Endothelial cell of umbilical vein (primary cell): ENCODE measurements at regions of chr17 and their contacts with region 1.

Region 1: GRCh38 chr17:35540589-35541404 is 3.3 kb upstream of the SLFN12L start:
- DNase-seq: peak; percentile 85
- H3K4me3 ChIP-seq: peak overlapping the region in 2 of 3 experiments; percentile 1 to 38
- H3K27ac ChIP-seq: peak overlapping the region; percentile 52
- H3K4me1 ChIP-seq: peaks cover 44% of the 10 kb centered on the region
- H3K27me3 ChIP-seq: no peaks in the 10 kb centered on the region
- CTCF ChIP-seq: no peak
- POLR2A ChIP-seq: peak; percentile 31

Region 2: DNA sequence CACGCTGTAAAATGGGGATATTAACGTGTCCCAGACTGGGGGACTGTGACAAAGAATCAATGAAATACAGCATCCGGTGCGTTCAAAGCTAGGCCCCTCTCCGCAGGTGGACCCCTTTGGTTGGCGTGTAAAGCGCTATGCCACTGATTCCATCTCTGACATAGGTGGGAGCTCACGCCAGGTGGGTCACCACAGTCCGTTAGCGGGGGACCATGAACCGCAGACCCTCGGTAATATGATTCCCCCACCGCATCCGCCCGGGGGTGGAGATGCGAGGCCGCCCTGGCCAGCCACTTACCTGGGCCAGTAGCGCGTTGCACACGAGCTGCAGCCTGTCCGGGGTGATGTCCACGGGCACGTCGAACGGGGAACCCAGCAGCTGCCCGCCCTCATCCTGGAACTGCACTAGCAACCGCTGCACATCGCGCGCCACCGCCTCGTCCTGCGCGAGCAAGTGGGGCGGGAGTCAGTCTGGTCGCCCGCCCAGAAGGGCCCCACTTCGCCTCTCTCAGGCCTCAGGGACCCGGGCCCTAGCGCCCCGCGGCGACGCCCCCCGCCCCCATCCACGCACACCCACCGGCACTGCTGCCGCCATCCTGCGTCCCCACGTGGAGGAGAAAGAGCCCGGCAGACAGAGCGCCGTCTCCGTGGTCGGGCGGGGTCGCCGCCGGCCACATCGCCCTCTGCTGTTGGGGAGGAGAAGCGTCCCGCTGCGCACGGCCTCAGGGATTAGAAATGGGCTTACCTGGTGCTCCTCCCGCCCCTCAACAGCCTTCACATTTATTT is 398.9 kb before region 1 on chr17 and contains the start of gene NLE1:
- CTCF ChIA-PET with region 1: interaction called, 7 read pairs
- POLR2A ChIA-PET with region 1: no interaction called
- dilution Hi-C with region 1: no loop called
- intact Hi-C with region 1: loop called (anchors 10 kb)
- DNase-seq: peak; percentile 80
- H3K4me3 ChIP-seq: peak within 1 kb of the TSS; percentile 77 to 91 (median 79)
- H3K27ac ChIP-seq: no peak within 1 kb of the TSS
- H3K4me1 ChIP-seq: peaks cover 6% of the 10 kb centered on the region
- H3K27me3 ChIP-seq: peaks cover 0 to 2% of the 10 kb centered on the region in 2 experiments
- CTCF ChIP-seq: peak; percentile 95 to 96
- POLR2A ChIP-seq: peak; percentile 73
- total RNA-seq, gene NLE1: 15.8 and 22.8 TPM in 2 replicates

Region 3: GRCh38 chr17:35242805-35243560 is 297.8 kb before region 1 on chr17 and contains the start of gene SLFN5:
- CTCF ChIA-PET with region 1: interaction called, 5 read pairs
- POLR2A ChIA-PET with region 1: no interaction called
- dilution Hi-C with region 1: no loop called
- intact Hi-C with region 1: loop called (anchors 2 kb)
- DNase-seq: peak; percentile 95
- H3K4me3 ChIP-seq: peak within 1 kb of the TSS; percentile 52 to 68 (median 58)
- H3K27ac ChIP-seq: peak within 1 kb of the TSS; percentile 82
- H3K4me1 ChIP-seq: peaks cover 27% of the 10 kb centered on the region
- H3K27me3 ChIP-seq: peaks cover 0 to 6% of the 10 kb centered on the region in 2 experiments
- CTCF ChIP-seq: no peak
- POLR2A ChIP-seq: peak; percentile 98
- total RNA-seq, gene SLFN5: 15.7 and 24.2 TPM in 2 replicates

Region 4: GRCh38 chr17:35373534-35373983 is 167.2 kb before region 1 on chr17 and contains the start of gene SLFN11:
- CTCF ChIA-PET with region 1: interaction called, 9 read pairs
- POLR2A ChIA-PET with region 1: no interaction called
- dilution Hi-C with region 1: no loop called
- intact Hi-C with region 1: loop called (anchors 1 kb)
- DNase-seq: peak; percentile 92
- H3K4me3 ChIP-seq: peak within 1 kb of the TSS; percentile 88 to 96 (median 90)
- H3K27ac ChIP-seq: peak within 1 kb of the TSS; percentile 98
- H3K4me1 ChIP-seq: peaks cover 21% of the 10 kb centered on the region
- H3K27me3 ChIP-seq: no peaks in the 10 kb centered on the region
- CTCF ChIP-seq: no peak
- POLR2A ChIP-seq: peak; percentile 97
- total RNA-seq, gene SLFN11: 95.0 and 110 TPM in 2 replicates

Region 5: DNA sequence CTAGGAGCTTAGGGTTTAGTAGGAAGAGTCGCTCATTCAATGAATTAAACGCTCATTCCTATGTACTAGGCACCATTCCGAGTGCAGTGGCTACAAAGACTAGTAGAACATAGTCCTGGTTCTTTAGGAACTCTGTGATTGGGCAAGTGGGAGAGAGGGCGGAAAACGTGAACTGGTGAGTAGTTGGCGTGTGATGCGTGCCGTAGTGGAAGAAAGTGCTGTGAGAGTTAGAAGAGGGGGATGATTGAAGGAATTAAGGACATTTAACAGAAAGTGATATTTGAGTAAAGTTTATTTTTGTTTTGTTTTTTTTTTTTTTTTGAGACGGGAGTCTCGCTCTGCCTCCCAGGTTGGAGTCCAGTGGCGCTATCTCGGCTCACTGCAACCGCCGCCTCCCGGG is 27.7 kb after region 1 on chr17:
- CTCF ChIA-PET with region 1: interaction called, 12 read pairs
- POLR2A ChIA-PET with region 1: no interaction called
- dilution Hi-C with region 1: no loop called
- intact Hi-C with region 1: loop called (anchors 1 kb)
- DNase-seq: peak; percentile 54
- H3K4me3 ChIP-seq: peak overlapping the region; percentile 72 to 94 (median 72)
- H3K27ac ChIP-seq: peak overlapping the region; percentile 83
- H3K4me1 ChIP-seq: peaks cover 10% of the 10 kb centered on the region
- H3K27me3 ChIP-seq: peaks cover 7 to 12% of the 10 kb centered on the region in 2 experiments
- CTCF ChIP-seq: no peak
- POLR2A ChIP-seq: no peak

Region 6: DNA sequence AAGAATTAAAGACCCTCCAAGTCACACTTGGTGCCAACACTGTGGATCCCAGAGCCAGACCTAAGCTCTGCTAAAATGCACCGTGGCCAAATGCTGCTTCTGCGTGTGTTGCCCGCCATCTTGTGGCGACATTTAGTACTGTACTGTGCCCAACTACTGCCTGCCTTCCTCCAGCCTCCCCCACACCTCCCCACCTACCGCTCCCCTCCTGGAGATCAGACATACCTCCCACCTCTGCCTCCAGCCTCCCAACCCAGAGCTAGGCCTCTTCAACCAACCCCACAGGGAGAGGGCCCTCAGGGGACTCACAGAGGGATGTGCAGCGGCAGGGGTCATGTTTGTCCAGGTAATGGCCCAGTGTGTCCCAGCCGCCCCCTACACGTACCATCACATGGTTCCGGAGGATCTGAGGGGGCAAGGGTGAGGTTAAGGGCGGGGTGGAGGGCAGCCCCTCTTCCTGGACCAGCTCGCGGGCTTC is 206.8 kb after region 1 on chr17:
- CTCF ChIA-PET with region 1: interaction called, 10 read pairs
- POLR2A ChIA-PET with region 1: no interaction called
- dilution Hi-C with region 1: no loop called
- intact Hi-C with region 1: loop called (anchors 1 kb)
- DNase-seq: peak; percentile 68
- H3K4me3 ChIP-seq: no peak overlapping the region
- H3K27ac ChIP-seq: no peak overlapping the region
- H3K4me1 ChIP-seq: no peaks in the 10 kb centered on the region
- H3K27me3 ChIP-seq: peaks cover 25% of the 10 kb centered on the region in 2 experiments
- CTCF ChIP-seq: peak; percentile 67 to 83
- POLR2A ChIP-seq: no peak

Region 7: GRCh38 chr17:36107660-36108059 is 566.9 kb after region 1 on chr17:
- CTCF ChIA-PET with region 1: no interaction called
- POLR2A ChIA-PET with region 1: no interaction called
- dilution Hi-C with region 1: no loop called
- intact Hi-C with region 1: no loop called
- DNase-seq: no peak
- H3K4me3 ChIP-seq: no peak overlapping the region
- H3K27ac ChIP-seq: no peak overlapping the region
- H3K4me1 ChIP-seq: no peaks in the 10 kb centered on the region
- H3K27me3 ChIP-seq: no peaks in the 10 kb centered on the region
- CTCF ChIP-seq: no peak
- POLR2A ChIP-seq: no peak